GM13976 (cell line): ENCODE measurements at regions of chr6 and their contacts with region 1.

Region 1: GRCh38 chr6:87929843-87930288 is 117.8 kb upstream of the SPACA1 start:
- DNase-seq: peak; percentile 70
- CTCF ChIP-seq: peak; percentile 89

Region 2: GRCh38 chr6:87879132-87879861 is 50.6 kb before region 1 on chr6:
- in situ Hi-C with region 1: no loop called
- DNase-seq: no peak
- CTCF ChIP-seq: no peak

Region 3: DNA sequence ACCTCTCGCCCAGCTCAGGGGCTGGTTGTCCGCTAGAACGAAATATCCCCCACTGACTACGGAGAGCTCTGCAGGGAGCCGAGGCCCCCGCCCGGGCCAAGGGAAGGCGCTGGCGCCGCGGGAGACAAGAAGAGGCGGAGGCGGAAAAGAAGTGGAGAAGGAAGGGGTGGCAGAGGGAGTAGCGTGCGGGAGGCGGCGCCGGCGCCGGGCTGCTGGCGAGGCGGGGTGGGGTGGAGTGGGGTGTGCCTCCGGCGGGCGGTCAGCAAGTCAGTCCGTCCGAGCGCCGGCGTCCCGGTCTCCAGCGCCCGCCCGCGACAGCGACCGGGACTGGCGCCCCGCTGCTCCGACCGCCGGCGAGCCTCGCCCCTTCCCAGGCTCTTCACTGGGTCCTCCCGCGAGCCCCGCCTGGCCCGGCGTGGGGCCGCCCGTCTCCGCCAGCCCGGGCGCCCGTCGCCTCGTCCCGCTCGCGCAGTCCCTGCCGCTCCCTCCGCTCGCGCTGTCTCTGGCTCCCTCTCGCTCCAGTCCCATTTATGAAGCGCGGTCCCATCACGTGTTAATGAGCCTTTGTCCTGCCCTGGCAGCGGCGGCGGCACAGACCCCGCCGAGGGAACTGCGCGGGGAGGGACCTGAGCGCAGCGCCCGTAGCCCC is 236.1 kb after region 1 on chr6 and contains the start of gene CNR1:
- in situ Hi-C with region 1: loop called (anchors 10 kb)
- DNase-seq: peak; percentile 74
- CTCF ChIP-seq: peak; percentile 60

Region 4: DNA sequence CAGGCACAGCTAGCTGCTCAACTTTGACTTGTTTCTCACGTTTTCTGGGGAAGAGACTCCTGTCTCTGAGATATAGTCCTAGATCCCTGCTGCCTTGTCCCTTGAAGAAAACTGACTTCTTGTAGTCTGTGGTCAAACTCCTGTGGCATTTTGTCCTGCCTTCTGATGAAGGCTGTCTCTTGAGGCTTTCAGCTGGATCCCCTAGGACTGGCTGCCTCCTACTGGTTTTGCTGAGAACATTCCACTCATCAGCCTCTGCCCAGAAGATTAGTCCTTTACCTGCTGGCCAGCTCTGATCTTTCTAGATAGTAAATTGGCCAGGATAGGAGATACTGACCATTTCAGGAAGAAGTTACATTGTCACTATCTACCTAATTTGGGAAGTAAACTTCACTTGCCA is 308.2 kb after region 1 on chr6:
- in situ Hi-C with region 1: loop called (anchors 10 kb)
- DNase-seq: peak; percentile 58
- CTCF ChIP-seq: peak; percentile 58

Region 5: DNA sequence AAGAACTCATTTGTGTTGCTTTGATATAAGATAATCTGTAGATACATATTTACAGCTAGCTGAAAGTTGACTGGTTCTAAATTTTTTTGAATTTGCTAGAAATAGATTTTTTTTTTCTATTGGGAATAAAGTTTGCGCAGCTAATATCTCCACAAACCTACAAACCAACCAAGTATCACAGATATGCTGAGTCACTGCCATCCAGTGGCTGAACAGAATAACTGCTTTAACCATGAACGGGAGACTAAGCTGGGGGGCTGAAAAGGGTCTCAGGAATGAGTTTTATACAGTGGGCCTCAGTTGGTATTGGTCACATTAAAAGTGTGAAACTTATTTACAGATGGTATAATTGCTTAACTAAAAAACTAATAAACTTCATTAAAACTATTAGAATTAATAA is 563.0 kb after region 1 on chr6:
- in situ Hi-C with region 1: loop called (anchors 25 kb)
- DNase-seq: no peak
- CTCF ChIP-seq: peak; percentile 11

Region 6: DNA sequence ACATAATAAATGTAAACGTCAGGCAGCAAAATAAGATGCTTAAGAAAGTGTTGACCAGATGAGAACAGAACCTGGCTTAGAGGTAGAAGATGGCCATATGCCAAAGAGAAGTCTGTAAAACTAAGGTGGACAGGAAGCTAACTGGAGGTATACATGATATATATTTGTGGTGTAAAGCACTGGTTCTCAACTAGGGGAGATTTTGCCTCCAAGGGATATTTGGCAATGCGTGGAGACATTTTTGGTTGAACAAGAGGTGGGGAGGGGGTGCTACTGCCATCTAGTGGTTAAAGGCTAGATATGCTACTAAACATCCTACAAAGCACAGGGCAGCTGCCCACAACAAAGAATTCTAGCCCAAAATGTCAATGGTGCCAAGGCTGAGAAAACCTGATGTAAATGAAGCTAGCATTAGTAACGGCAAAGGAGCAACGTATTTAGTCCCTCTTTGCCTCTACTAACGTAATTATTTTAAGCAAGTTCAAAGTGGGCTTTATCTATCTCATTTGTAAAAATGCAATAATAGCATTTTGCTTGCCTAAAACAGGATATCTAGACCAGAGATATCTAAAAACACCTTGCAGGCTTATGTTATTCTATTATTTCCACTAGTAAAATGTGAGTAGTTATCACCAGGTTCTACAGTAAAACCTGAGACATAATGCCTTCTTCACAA is 851.0 kb after region 1 on chr6:
- in situ Hi-C with region 1: loop called (anchors 25 kb)
- DNase-seq: no peak
- CTCF ChIP-seq: peak; percentile 47

Region 7: GRCh38 chr6:88870717-88871330 is 941.0 kb after region 1 on chr6:
- in situ Hi-C with region 1: loop called (anchors 10 kb)
- DNase-seq: peak; percentile 16
- CTCF ChIP-seq: peak; percentile 51